Calu3 (cell line): ENCODE measurements at regions of chr2 and their contacts with region 1.

Region 1: DNA sequence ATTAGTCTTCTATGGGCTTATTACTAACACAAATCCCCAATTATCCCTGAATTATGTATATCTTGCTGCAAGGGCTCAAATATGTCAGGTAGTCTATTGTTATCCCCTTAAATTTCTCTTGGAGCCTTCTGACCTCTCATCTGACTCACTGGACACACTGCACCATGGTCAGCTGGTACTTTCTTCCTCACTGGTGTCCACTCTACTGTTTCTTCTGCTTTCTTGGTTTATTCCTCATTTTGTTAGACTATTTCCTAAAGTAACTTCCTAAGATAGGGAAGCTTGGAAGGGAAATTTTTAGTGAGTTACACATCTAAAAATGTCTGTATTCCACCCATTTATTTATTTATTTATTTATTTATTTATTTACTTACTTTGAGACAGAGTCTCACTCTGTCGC is 26.5 kb downstream of the WDR35 start:
- DNase-seq: no peak
- H3K4me3 Mint-ChIP-seq: no peak overlapping the region
- H3K27ac Mint-ChIP-seq: no peak overlapping the region
- H3K4me1 Mint-ChIP-seq: no peaks in the 10 kb centered on the region
- H3K27me3 Mint-ChIP-seq: no peaks in the 10 kb centered on the region
- CTCF ChIP-seq: no peak

Region 2: DNA sequence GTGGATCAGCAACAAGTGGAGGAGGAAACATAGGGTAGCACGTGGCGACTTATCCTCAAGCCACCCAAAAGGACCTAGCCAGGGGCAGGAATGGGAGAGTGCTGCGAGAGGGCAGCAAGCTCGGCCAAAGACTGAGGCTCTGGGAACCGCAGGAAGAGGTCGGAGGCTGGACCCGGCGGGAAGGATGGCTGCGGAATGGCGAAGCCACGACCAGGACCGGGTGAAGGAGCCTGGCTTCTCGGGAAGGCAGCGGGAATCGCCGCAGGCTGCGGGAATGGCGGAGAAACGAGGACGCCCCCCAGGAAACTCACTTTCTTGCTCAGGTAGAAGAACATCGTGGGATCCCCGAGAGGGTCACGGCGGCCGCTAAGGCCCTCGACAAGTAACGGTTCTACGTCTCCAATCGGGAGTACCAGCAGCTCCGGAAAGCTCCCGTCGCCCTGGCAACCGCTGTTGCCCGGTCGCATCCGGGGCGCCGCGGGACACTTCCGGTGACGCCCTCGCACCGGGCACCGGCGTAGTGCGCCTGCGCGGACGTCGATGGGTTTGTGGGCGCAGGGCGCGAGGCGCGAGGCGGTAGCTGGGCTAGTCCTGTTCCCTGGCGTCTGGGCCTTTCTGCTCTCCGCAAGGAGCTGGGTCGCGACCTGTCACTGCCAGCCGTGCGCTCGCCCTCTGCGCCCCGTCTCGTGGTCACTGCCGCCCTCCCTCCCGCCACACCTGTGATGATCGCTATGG is 26.5 kb after region 1 on chr2 and contains the start of gene WDR35:
- CTCF ChIA-PET with region 1: no interaction called
- intact Hi-C with region 1: loop called (anchors 2 kb)
- DNase-seq: peak; percentile 96
- H3K4me3 Mint-ChIP-seq: peak within 1 kb of the TSS; percentile 94
- H3K27ac Mint-ChIP-seq: peak within 1 kb of the TSS; percentile 76
- H3K4me1 Mint-ChIP-seq: peaks cover 10% of the 10 kb centered on the region
- H3K27me3 Mint-ChIP-seq: no peaks in the 10 kb centered on the region
- CTCF ChIP-seq: no peak
- total RNA-seq, gene WDR35: 8.8 and 9.8 TPM in 2 replicates

Region 3: GRCh38 chr2:20080839-20081415 is 117.5 kb after region 1 on chr2:
- CTCF ChIA-PET with region 1: no interaction called
- intact Hi-C with region 1: no loop called
- DNase-seq: no peak
- H3K4me3 Mint-ChIP-seq: no peak overlapping the region
- H3K27ac Mint-ChIP-seq: no peak overlapping the region
- H3K4me1 Mint-ChIP-seq: no peaks in the 10 kb centered on the region
- H3K27me3 Mint-ChIP-seq: no peaks in the 10 kb centered on the region
- CTCF ChIP-seq: no peak

Region 4: GRCh38 chr2:20806286-20806685 is 842.9 kb after region 1 on chr2:
- CTCF ChIA-PET with region 1: no interaction called
- intact Hi-C with region 1: no loop called
- DNase-seq: no peak
- H3K4me3 Mint-ChIP-seq: no peak overlapping the region
- H3K27ac Mint-ChIP-seq: no peak overlapping the region
- H3K4me1 Mint-ChIP-seq: no peaks in the 10 kb centered on the region
- H3K27me3 Mint-ChIP-seq: no peaks in the 10 kb centered on the region
- CTCF ChIP-seq: no peak